ENCODE measurements at regions of chr1 and their contacts with region 1.

Region 1: GRCh38 chr1:233520261-233521191 is 93.4 kb upstream of the KCNK1 start:
- DNase-seq: no peak
- ATAC-seq: no peak
- H3K4me3 ChIP-seq: no peak overlapping the region
- H3K27ac ChIP-seq: no peak overlapping the region
- H3K4me1 ChIP-seq: no peaks in the 10 kb centered on the region
- H3K27me3 ChIP-seq: no peaks in the 10 kb centered on the region
- CTCF ChIP-seq: no peak

Region 2: DNA sequence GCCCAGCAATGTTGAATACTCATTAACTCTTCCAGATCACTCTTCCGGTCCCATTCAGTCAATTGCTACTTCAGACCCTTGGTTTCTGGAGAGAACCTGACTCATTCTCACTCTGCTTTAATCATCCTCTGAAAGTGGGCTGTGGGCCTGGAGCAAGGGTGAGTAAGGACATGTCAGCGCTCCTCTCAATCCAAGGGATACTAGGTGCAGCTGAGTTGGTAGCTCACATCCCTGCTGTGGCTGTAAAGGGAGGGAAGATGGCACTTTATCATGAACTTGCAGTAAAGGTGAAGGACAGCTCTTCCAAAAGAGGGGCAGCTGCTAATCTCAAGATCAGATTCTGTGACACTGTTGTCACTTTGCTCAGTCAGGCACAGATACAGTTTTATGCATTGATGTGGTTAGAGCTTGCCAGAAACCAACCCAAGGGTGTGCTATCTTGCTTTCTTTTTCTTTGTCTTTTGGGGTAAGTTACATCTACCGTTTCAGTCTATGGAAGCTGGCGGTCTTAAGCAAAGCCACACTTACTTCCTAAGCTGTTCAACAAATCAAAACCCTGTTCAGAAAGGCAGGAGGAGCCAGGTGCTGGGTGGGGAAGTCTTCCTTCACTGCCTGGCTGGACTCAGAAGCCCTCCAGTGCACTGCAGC is 596.7 kb before region 1 on chr1:
- intact Hi-C with region 1: loop called (anchors 10 kb)
- DNase-seq: no peak
- ATAC-seq: no peak
- H3K4me3 ChIP-seq: no peak overlapping the region
- H3K27ac ChIP-seq: no peak overlapping the region
- H3K4me1 ChIP-seq: no peaks in the 10 kb centered on the region
- H3K27me3 ChIP-seq: no peaks in the 10 kb centered on the region
- CTCF ChIP-seq: no peak